ENCODE measurements at regions of chr16 and their contacts with region 1.

Region 1: DNA sequence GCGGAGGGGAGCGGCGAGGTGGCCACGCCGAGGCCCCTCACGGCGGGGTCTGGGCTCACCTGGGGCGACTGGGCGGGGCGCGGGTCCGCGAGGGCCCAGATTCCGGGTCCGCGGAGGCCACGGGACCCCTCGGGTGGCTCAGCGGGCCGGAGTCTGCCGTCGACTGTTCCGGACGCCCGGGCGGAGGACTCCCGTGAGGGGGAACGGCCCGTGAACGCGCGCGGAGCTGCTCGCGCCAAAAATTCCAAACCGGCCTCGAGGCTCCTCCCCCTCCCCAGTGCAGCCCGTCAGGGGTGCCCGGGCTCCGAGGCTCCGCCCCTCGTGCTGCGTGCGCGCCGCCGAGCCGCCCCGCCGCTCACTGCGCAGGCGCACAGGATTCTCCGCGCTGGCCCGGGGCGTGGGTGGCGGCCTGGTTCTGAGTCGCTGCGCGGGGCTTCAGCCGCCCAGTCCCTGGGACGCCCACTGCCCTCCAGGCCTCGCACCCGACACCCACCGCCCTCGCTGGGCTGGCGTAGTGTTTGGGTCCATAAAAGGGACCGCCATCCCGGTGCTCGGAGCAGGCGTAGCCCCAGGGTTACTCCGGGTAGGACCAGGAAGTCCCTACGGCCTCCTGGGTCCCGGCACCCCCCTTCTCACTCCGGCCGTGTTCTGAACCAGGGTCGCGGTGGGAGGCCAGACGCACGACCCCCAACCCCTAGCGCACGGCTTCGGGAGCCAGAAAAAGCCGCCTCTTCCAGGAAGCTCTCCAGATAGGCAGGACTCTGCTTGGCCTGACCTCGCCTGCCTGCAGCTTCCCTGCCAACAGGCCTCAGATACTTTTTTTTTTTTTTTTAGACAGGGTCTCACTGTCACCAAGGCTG is at the start of gene PKMYT1:
- DNase-seq: peak; percentile 95
- H3K4me3 Mint-ChIP-seq: peak within 1 kb of the TSS; percentile 88
- H3K27ac Mint-ChIP-seq: peak within 1 kb of the TSS; percentile 86
- H3K4me1 Mint-ChIP-seq: peaks cover 46% of the 10 kb centered on the region
- H3K27me3 Mint-ChIP-seq: peaks cover 20% of the 10 kb centered on the region

Region 2: DNA sequence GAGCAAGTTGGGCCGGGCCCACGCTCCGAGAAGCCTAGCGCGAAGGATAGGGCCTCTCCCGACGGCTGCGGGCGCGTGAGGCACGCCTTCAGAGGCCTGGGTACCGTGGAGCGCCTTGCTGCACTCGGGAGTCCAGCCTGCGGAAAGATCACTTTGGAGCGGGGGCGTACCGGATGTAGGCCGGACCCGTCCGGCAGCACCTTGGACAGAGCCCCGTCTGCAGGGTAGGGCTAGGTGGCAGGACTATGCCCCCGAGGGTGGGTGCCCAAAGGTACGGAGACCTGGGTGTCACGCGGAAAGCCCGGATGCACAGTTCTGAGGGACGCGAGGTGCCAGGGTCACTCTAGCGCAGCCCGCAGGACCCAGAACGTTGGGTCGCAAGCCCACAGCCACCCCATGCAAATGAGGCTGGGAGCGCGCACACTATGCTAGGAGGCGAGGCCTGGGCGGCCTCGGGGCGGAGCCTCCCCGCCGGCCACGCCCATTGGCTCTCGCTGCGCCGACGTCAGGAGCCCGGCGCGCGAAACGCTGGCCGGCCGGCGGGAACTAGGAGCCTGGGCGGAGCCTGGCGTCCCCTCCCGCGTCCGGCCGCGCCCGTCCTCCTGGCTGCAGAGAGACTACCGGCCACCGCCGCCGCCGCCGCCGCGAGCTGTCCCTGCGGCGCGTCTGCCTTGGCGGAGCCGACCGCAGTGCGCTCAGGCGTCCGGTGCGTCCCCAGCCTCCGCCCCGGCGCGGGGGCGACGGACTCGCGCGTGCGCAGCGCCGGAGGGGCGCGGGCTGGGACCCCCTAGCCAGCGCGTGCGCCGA is 11.5 kb before region 1 on chr16 and contains the start of gene PAQR4:
- CTCF ChIA-PET with region 1: interaction called, 14 read pairs
- DNase-seq: peak; percentile 87
- H3K4me3 Mint-ChIP-seq: peak within 1 kb of the TSS; percentile 74
- H3K27ac Mint-ChIP-seq: peak within 1 kb of the TSS; percentile 74
- H3K4me1 Mint-ChIP-seq: peaks cover 37% of the 10 kb centered on the region
- H3K27me3 Mint-ChIP-seq: peaks cover 52% of the 10 kb centered on the region

Region 3: DNA sequence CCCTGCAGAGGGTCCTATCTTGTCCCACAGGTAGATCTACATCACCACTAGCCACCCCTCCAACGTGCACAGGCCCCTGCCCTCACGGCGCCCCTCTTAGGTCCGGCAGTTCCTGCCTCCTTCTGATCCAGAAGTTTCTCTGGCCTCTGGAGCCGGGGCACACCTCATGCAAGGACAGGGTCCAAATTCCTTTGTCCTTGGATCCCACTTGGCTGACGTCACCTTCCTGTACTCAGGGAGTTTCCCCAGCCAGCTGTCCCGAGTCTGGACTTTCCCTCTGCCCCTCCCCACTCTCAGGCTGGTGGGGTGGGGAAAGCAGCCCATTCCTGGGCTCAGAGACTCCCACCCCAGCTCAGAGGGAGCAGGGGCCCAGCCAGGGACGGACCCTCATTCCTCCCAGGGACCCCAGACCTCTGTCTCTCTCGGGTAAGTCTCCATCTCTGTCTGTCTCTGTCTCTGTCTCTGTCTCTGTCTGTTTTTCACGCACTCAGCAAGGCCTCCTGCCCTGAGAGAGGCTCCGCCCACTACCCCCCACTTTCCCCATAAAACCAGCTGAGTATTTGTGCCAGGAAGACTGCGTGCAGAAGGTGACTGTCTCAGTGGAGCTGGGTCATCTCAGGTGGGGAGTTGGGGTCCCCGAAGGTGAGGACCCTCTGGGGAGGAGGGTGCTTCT is 84.7 kb after region 1 on chr16 and contains the start of gene IL32:
- CTCF ChIA-PET with region 1: no interaction called
- DNase-seq: peak; percentile 81
- H3K4me3 Mint-ChIP-seq: peak within 1 kb of the TSS; percentile 95
- H3K27ac Mint-ChIP-seq: peak within 1 kb of the TSS; percentile 94
- H3K4me1 Mint-ChIP-seq: peaks cover 78% of the 10 kb centered on the region
- H3K27me3 Mint-ChIP-seq: no peaks in the 10 kb centered on the region